Activated CD4-positive, alpha-beta memory T cell treated with anti-CD3 and anti-CD28 coated beads for 36 hours (primary cell): ENCODE measurements at regions of chr20 and their contacts with region 1.

Region 1: GRCh38 chr20:35463455-35464300 is 8.3 kb downstream of the CEP250 start:
- DNase-seq: peak; percentile 58
- H3K4me3 Mint-ChIP-seq: no peak overlapping the region
- H3K27ac Mint-ChIP-seq: no peak overlapping the region
- H3K4me1 Mint-ChIP-seq: no peaks in the 10 kb centered on the region
- H3K27me3 Mint-ChIP-seq: no peaks in the 10 kb centered on the region

Region 2: DNA sequence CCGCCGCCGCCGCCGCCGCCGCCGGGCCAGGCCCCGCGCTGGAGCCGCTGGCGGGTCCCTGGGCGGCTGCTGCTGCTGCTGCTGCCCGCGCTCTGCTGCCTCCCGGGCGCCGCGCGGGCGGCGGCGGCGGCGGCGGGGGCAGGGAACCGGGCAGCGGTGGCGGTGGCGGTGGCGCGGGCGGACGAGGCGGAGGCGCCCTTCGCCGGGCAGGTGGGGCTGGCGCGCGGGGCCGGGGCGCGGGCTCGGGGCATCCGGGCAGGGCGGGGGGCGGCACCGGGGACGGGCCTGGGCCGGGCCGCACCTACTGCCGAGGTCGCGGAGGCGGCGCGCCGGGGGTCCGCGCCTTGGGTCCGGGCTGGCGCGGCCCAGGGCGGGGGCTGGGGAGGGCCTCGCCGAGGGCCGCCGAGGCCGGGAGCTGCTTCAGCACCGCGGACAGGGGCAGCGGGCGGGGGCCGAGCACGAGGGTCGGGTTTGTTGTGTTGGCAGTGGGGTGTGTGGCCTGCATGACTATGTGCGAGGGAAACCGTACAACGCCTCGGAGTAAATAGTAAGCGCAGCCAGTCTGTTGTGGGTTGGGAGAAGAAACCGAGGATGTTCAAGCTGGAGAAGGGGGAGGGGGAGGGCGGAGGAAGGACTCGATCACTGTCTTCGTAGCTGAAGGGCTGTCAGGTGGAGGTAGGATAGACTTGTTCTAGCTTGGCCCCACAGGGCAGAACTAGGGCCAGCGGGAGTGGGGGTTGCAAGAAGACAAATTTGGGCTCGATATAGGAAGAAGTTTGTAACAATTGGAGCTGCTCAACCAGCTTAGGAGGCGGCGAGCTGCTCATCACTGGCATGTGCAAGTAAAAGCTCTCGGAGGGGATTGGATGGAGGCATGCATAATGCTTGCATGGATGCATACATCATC is 236.7 kb before region 1 on chr20:
- CTCF ChIA-PET with region 1: no interaction called
- POLR2A ChIA-PET with region 1: no interaction called
- intact Hi-C with region 1: no loop called
- DNase-seq: peak; percentile 65
- H3K4me3 Mint-ChIP-seq: peak overlapping the region; percentile 55
- H3K27ac Mint-ChIP-seq: no peak overlapping the region
- H3K4me1 Mint-ChIP-seq: peaks cover 7% of the 10 kb centered on the region
- H3K27me3 Mint-ChIP-seq: peaks cover 27% of the 10 kb centered on the region

Region 3: DNA sequence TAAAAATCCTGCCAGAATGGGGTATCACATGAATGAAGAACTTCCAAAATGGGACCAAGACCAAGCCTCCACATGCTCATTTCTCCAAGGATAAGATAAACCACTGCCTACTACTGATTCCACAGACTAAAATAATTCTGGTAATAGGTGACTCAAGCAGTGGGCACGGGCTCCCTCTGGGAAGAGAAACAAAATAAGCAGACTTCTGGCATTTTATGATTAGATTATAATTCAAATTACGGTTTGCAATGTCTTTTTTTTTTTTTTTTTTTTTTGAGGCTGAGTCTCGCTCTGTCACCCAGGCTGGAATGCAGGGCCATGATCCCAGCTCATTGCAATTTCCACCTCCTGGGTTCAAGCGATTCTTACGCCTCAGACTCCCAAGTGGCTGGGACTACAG is 68.0 kb before region 1 on chr20:
- CTCF ChIA-PET with region 1: no interaction called
- POLR2A ChIA-PET with region 1: no interaction called
- intact Hi-C with region 1: no loop called
- DNase-seq: no peak
- H3K4me3 Mint-ChIP-seq: no peak overlapping the region
- H3K27ac Mint-ChIP-seq: no peak overlapping the region
- H3K4me1 Mint-ChIP-seq: peaks cover 10% of the 10 kb centered on the region
- H3K27me3 Mint-ChIP-seq: no peaks in the 10 kb centered on the region

Region 4: GRCh38 chr20:35474303-35474871 is 10.7 kb after region 1 on chr20:
- CTCF ChIA-PET with region 1: interaction called, 18 read pairs
- POLR2A ChIA-PET with region 1: no interaction called
- intact Hi-C with region 1: no loop called
- DNase-seq: no peak
- H3K4me3 Mint-ChIP-seq: no peak overlapping the region
- H3K27ac Mint-ChIP-seq: no peak overlapping the region
- H3K4me1 Mint-ChIP-seq: no peaks in the 10 kb centered on the region
- H3K27me3 Mint-ChIP-seq: no peaks in the 10 kb centered on the region

Region 5: GRCh38 chr20:35611482-35611881 is 147.8 kb after region 1 on chr20:
- CTCF ChIA-PET with region 1: no interaction called
- POLR2A ChIA-PET with region 1: no interaction called
- intact Hi-C with region 1: no loop called
- DNase-seq: no peak
- H3K4me3 Mint-ChIP-seq: no peak overlapping the region
- H3K27ac Mint-ChIP-seq: no peak overlapping the region
- H3K4me1 Mint-ChIP-seq: peaks cover 7% of the 10 kb centered on the region
- H3K27me3 Mint-ChIP-seq: no peaks in the 10 kb centered on the region

Region 6: GRCh38 chr20:35883778-35884540 is 420.3 kb after region 1 on chr20:
- CTCF ChIA-PET with region 1: interaction called, 10 read pairs
- POLR2A ChIA-PET with region 1: no interaction called
- intact Hi-C with region 1: no loop called
- DNase-seq: peak; percentile 75
- H3K4me3 Mint-ChIP-seq: no peak overlapping the region
- H3K27ac Mint-ChIP-seq: no peak overlapping the region
- H3K4me1 Mint-ChIP-seq: peaks cover 8% of the 10 kb centered on the region
- H3K27me3 Mint-ChIP-seq: no peaks in the 10 kb centered on the region

Region 7: GRCh38 chr20:36030149-36030548 is 566.5 kb after region 1 on chr20:
- CTCF ChIA-PET with region 1: no interaction called
- POLR2A ChIA-PET with region 1: no interaction called
- intact Hi-C with region 1: no loop called
- DNase-seq: no peak
- H3K4me3 Mint-ChIP-seq: no peak overlapping the region
- H3K27ac Mint-ChIP-seq: no peak overlapping the region
- H3K4me1 Mint-ChIP-seq: no peaks in the 10 kb centered on the region
- H3K27me3 Mint-ChIP-seq: peaks cover 2% of the 10 kb centered on the region